ENCODE measurements at regions of chr1 and their contacts with region 1.

Region 1: GRCh38 chr1:160453443-160453842 is 53.1 kb downstream of the VANGL2 start:
- DNase-seq: no peak
- H3K4me3 ChIP-seq: no peak overlapping the region
- H3K4me3 Mint-ChIP-seq: peak overlapping the region; percentile 1 to 71 (median 63)
- H3K27ac ChIP-seq: no peak overlapping the region
- H3K27ac Mint-ChIP-seq: peak overlapping the region; percentile 13 to 91 (median 68)
- H3K4me1 ChIP-seq: peaks cover 14% of the 10 kb centered on the region
- H3K4me1 Mint-ChIP-seq: peaks cover 53 to 83% (median 73%) of the 10 kb centered on the region in 3 donors
- H3K27me3 ChIP-seq: no peaks in the 10 kb centered on the region
- H3K27me3 Mint-ChIP-seq: no peaks in the 10 kb centered on the region

Region 2: DNA sequence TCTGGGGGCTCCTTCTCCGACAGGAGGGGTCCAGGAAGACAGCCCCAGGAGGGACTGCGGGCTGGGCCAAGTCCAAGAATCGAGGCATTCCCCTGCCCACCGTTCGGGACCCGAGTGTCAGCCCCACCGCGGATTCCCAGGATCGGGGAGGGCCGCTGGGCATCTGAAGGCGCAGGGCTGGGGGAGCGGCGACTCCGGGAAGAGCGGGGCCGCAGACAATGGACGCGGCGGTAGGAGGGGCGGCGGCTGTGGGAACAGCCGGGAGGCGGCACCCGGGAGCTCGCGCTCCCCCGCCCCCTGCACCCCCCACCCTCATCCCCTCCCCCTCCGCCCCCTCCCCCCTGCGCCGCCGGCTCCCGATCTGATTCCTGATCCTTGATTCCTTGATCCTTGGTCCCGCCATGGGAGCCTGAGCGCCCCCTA is 53.2 kb before region 1 on chr1 and contains the start of gene VANGL2:
- CTCF ChIA-PET with region 1: no interaction called
- POLR2A ChIA-PET with region 1: no interaction called
- DNase-seq: peak; percentile 18 to 59 (median 25)
- H3K4me3 ChIP-seq: peak within 1 kb of the TSS; percentile 34
- H3K4me3 Mint-ChIP-seq: peak within 1 kb of the TSS; percentile 15 to 88 (median 65)
- H3K27ac ChIP-seq: no peak within 1 kb of the TSS
- H3K27ac Mint-ChIP-seq: peak within 1 kb of the TSS in 1 of 8 donors; percentile 43
- H3K4me1 ChIP-seq: peaks cover 5% of the 10 kb centered on the region
- H3K4me1 Mint-ChIP-seq: peaks cover 6% of the 10 kb centered on the region in 3 donors
- H3K27me3 ChIP-seq: peaks cover 16% of the 10 kb centered on the region
- H3K27me3 Mint-ChIP-seq: peaks cover 19 to 39% of the 10 kb centered on the region in 2 donors
- total RNA-seq, gene VANGL2: 0.04 to 0.07 TPM

Region 3: DNA sequence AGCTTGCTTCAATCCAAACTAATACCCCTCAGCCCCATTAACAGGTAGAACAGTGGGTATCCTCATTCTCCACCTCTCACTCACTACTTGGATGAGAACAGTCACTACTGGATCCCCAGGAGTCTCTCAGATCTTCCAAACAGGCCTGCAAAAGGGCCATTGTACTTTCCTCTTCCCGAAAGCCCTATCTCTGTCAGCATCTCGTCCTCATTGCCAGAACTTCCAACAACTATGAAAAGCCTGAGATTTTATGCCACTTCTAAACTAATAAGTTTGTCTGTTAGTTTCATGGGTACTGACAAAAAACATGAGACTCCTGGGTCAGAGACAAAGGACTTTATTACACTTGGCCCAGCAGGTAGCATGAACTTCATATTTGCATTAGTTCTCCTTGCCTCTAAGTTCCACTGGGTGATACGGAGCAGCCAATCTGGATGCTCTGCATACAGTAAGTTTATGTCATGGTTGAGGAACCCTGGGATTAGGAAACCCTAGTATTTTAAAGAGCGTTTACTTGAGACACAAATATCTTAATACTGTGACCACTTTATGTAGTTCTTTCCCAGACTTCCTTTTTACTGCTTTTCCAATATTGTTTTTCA is 15.0 kb before region 1 on chr1:
- CTCF ChIA-PET with region 1: no interaction called
- POLR2A ChIA-PET with region 1: interaction called, 11 read pairs
- DNase-seq: no peak
- H3K4me3 ChIP-seq: peak overlapping the region; percentile 65
- H3K4me3 Mint-ChIP-seq: peak overlapping the region; percentile 48 to 93 (median 82)
- H3K27ac ChIP-seq: peak overlapping the region; percentile 69
- H3K27ac Mint-ChIP-seq: peak overlapping the region; percentile 86 to 100 (median 97)
- H3K4me1 ChIP-seq: peaks cover 31% of the 10 kb centered on the region
- H3K4me1 Mint-ChIP-seq: peaks cover 41 to 61% (median 55%) of the 10 kb centered on the region in 3 donors
- H3K27me3 ChIP-seq: no peaks in the 10 kb centered on the region
- H3K27me3 Mint-ChIP-seq: no peaks in the 10 kb centered on the region